AG04449 (cell line): ENCODE measurements at regions of chr3 and their contacts with region 1.

Region 1: GRCh38 chr3:128680602-128681368 is 30.2 kb upstream of the RPN1 start:
- DNase-seq: peak; percentile 73
- H3K4me3 ChIP-seq: peak overlapping the region; percentile 80
- CTCF ChIP-seq: peak; percentile 100

Region 2: GRCh38 chr3:128322066-128323022 is 358.4 kb before region 1 on chr3:
- CTCF ChIA-PET with region 1: no interaction called
- POLR2A ChIA-PET with region 1: no interaction called
- DNase-seq: no peak
- H3K4me3 ChIP-seq: no peak overlapping the region
- CTCF ChIP-seq: peak; percentile 67

Region 3: DNA sequence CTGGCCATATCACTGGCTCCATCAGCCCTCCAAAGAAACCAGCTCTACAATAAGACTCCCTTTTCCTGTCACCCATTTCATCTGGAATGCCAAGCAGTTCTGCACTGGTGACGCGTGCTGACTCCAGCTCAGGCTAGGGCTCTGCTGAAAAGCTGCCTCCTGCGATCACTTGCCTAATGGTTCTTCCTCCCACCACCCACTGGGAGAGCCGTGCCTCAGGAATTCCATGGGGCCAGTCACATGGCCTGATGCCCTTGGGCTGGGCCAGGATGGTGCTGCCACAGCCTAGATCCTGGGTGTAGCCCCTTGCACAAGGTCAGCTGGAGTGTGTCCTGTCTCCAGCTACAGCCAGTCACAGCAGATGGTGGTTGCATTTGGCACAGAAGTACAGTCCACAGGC is 313.0 kb before region 1 on chr3:
- CTCF ChIA-PET with region 1: no interaction called
- POLR2A ChIA-PET with region 1: no interaction called
- DNase-seq: no peak
- H3K4me3 ChIP-seq: no peak overlapping the region
- CTCF ChIP-seq: no peak

Region 4: DNA sequence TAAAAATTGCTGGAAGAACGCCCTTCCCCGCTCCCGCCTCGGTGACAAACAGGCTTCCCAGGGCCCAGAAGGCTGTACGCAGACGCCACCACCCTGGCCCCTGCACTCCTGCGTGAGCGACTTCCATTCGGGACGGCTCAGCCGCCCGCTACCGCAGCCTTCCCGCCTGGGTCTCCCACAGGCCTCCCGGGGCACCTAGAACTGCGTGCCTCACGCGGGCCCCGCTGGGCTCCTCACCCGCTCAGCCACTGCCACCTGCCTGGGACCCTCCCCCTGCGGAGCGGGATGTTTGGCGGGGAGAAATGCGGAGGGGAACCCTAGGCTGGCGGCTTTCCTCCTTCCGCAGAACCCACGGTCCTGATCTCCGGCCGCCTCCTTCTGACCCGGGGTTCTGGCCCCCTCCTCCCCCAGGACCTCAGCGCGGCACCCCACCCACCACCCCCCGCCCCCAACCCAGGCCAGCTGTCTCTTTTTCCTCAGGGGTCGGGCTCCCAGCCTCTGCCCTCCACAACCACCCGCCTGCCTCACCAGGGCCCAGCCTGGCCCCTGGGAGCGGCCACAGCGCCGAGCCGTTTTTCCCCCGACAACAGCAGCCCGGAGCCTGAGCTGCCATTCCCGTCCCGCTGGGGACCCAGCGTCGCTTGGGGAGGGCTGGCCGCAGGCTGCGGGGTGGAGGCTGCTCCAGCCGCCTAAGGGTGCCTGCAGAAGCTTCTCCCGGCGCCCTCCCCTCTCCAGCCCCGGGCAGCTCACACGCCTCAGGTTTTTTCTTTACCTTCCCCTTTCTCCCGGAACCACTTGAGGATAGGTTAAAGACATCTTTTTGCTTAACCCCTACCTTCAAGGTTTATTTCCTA is 17.7 kb after region 1 on chr3:
- CTCF ChIA-PET with region 1: interaction called, 41 read pairs
- POLR2A ChIA-PET with region 1: interaction called, 6 read pairs
- DNase-seq: no peak
- H3K4me3 ChIP-seq: peak overlapping the region; percentile 51
- CTCF ChIP-seq: no peak

Region 5: GRCh38 chr3:128725932-128726690 is 45.3 kb after region 1 on chr3 and contains the start of gene RAB7A:
- CTCF ChIA-PET with region 1: interaction called, 26 read pairs
- POLR2A ChIA-PET with region 1: interaction called, 8 read pairs
- DNase-seq: peak; percentile 89
- H3K4me3 ChIP-seq: peak within 1 kb of the TSS; percentile 95
- CTCF ChIP-seq: peak; percentile 9

Region 6: DNA sequence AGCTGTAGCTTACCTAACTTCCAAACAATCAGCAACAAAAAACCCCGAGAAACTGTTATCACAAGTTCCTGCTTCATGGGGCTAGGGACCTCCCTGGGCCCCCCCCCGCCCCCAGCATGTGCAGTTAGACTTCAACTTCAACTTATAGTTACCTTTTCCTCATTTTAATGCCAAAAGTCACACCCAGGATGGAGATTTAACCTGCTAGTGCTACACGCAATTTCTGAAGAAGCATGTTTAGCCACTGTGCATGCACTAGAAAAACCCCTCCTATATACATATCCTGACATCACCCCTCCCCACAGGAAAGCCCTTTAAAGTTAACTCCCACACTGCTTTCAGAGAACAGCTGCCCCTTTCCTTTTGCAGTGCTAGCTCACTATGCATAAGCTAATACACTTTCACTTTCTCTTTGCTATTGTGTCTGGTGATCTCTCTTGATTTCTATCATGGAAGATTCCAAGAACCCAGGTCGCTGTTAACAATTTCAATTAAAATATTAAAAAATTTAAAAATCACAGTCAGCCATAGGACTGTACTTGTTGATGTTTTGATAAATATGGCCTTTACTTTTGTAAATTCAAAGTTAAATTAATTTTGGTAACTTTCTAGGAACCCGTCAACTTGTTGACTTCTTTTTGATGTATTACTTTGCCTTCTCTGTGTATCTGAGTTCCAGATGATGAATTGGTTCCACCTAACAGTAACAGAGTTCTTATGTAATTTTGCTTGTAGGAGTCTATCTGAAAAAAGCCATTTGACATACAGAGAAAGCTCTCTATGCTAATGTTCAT is 123.4 kb after region 1 on chr3:
- CTCF ChIA-PET with region 1: interaction called, 134 read pairs
- POLR2A ChIA-PET with region 1: no interaction called
- DNase-seq: no peak
- H3K4me3 ChIP-seq: no peak overlapping the region
- CTCF ChIP-seq: no peak

Region 7: GRCh38 chr3:128824132-128824850 is 143.5 kb after region 1 on chr3:
- CTCF ChIA-PET with region 1: interaction called, 15 read pairs
- POLR2A ChIA-PET with region 1: no interaction called
- DNase-seq: no peak
- H3K4me3 ChIP-seq: no peak overlapping the region
- CTCF ChIP-seq: no peak

Region 8: GRCh38 chr3:128879125-128879969 is 198.6 kb after region 1 on chr3 and contains the start of gene ACAD9:
- CTCF ChIA-PET with region 1: interaction called, 23 read pairs
- POLR2A ChIA-PET with region 1: interaction called, 17 read pairs
- DNase-seq: peak; percentile 80
- H3K4me3 ChIP-seq: peak within 1 kb of the TSS; percentile 89
- CTCF ChIP-seq: no peak